ENCODE measurements at regions of chr3 and their contacts with region 1.

Region 1: GRCh38 chr3:51799879-51800749 is 21.1 kb upstream of the IQCF6 start:
- DNase-seq: peak in 1 of 6 donors; percentile 39
- ATAC-seq: peak; percentile 76 to 89 (median 86)
- H3K4me3 ChIP-seq: no peak overlapping the region
- H3K27ac ChIP-seq: no peak overlapping the region
- H3K4me1 ChIP-seq: no peaks in the 10 kb centered on the region
- H3K27me3 ChIP-seq: peaks cover 0 to 5% (median 0%) of the 10 kb centered on the region in 4 donors
- CTCF ChIP-seq: peak; percentile 37 to 76 (median 59)

Region 2: DNA sequence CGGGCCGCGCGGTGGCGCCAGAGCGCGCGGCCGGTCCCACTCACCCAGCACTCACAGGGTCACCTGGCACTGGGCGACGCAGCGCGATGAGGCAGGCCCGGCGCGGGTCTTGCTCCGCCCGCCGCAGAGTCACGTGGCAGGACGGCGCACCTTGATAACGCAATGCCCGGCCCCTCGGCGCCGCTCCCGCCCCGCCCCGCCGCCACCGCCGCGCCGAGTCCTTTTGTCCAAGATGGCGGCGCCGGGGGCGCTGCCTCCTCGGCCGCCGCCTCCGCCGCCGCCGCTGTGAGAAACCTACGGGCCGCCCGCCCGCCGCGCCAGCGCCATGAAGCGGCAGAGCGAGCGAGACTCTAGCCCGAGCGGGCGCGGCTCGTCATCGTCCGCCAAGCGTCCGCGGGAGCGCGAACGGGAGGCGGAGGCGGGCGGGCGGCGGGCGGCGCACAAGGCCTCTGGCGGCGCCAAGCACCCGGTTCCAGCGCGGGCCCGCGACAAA is 409.0 kb before region 1 on chr3 and contains the start of gene RBM15B:
- intact Hi-C with region 1: loop called in 1 of 3 experiments (anchors 10 kb)
- DNase-seq: peak; percentile 98 to 99 (median 98)
- ATAC-seq: peak; percentile 91 to 95 (median 94)
- H3K4me3 ChIP-seq: peak within 1 kb of the TSS; percentile 60 to 88 (median 71)
- H3K27ac ChIP-seq: peak within 1 kb of the TSS; percentile 69 to 80 (median 72)
- H3K4me1 ChIP-seq: peaks cover 38 to 62% (median 53%) of the 10 kb centered on the region in 3 donors
- H3K27me3 ChIP-seq: no peaks in the 10 kb centered on the region
- CTCF ChIP-seq: peak in 2 of 4 donors; percentile 82 to 95
- total RNA-seq, gene RBM15B: 12.6 to 19.0 (median 17.7) TPM

Region 3: GRCh38 chr3:51718547-51719409 is 81.3 kb before region 1 on chr3:
- intact Hi-C with region 1: loop called in 1 of 3 experiments (anchors 10 kb)
- DNase-seq: peak; percentile 39 to 81 (median 65)
- ATAC-seq: peak; percentile 75 to 98 (median 91)
- H3K4me3 ChIP-seq: no peak overlapping the region
- H3K27ac ChIP-seq: no peak overlapping the region
- H3K4me1 ChIP-seq: no peaks in the 10 kb centered on the region
- H3K27me3 ChIP-seq: no peaks in the 10 kb centered on the region
- CTCF ChIP-seq: peak; percentile 9 to 54 (median 36)

Region 4: GRCh38 chr3:51759203-51759602 is 40.9 kb before region 1 on chr3:
- intact Hi-C with region 1: no loop called
- DNase-seq: no peak
- ATAC-seq: no peak
- H3K4me3 ChIP-seq: no peak overlapping the region
- H3K27ac ChIP-seq: no peak overlapping the region
- H3K4me1 ChIP-seq: no peaks in the 10 kb centered on the region
- H3K27me3 ChIP-seq: no peaks in the 10 kb centered on the region
- CTCF ChIP-seq: no peak